Astrocyte of the cerebellum (primary cell): ENCODE measurements at regions of chr10 and their contacts with region 1.

Region 1: DNA sequence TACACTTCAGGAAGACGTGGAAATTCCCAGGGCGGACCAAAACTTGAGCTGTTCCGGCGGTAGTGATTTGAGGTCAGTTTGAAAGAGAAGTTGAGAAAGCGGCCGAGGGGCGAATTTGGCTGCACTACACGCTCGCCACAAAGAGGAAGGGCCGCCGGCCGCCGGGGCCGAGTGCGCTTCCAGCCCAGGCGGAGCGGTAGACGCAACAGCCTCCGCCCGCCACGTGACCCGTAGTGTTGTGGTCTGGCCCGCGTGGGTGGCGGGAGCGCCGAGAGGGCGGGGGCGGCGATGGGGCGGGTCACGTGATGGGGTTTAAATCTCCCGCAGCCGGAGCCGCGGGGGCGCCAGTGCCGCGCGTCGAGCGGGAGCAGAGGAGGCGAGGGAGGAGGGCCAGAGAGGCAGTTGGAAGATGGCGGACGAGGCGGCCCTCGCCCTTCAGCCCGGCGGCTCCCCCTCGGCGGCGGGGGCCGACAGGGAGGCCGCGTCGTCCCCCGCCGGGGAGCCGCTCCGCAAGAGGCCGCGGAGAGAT is at the start of gene SIRT1:
- DNase-seq: peak; percentile 86
- H3K4me3 ChIP-seq: peak within 1 kb of the TSS; percentile 82
- CTCF ChIP-seq: no peak

Region 2: GRCh38 chr10:67735430-67735829 is 148.9 kb before region 1 on chr10:
- in situ Hi-C with region 1: no loop called
- DNase-seq: no peak
- H3K4me3 ChIP-seq: no peak overlapping the region
- CTCF ChIP-seq: no peak

Region 3: GRCh38 chr10:67839951-67840350 is 44.4 kb before region 1 on chr10:
- in situ Hi-C with region 1: no loop called
- DNase-seq: no peak
- H3K4me3 ChIP-seq: no peak overlapping the region
- CTCF ChIP-seq: no peak

Region 4: DNA sequence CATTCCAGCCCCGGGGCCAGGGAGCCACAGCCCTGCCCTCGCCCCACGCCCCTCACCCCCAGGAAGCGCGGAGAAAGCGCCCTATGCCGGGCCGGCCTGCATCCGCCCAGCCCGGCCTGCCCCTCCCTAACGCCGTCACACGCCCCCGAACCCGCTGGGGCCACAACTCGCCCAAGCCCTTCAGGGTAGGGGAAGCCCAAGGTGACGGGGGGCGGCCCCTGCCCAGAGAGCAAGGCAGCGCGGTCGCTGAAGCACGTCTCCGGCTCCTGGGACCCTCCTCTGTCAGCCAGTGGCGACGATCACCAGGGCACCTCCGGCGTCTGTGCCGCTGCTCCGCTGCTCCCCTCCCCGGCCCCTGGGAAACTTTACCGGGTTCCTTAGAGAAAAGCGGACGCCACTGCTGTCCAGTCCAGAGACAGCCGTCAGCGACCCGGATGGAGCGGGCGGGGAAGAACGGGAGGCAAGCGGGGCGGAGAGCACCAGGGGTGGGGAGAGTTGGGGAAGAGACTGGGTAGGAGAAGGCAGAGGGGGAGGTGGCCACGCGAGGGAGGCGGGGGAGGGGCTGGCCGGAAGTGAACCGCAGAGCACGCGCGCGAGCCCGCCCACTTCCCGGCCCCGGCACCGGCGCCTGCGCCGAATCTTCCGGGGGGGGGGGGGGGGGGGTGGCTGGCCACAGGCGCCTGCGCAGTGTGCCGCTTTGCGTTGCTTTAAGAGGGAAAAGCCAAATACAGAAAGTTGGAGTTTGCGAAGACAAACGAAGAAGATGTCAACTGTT is 190.6 kb after region 1 on chr10 and contains the start of gene HERC4:
- in situ Hi-C with region 1: loop called (anchors 25 kb)
- DNase-seq: peak; percentile 81
- H3K4me3 ChIP-seq: peak within 1 kb of the TSS; percentile 96
- CTCF ChIP-seq: no peak